ENCODE measurements at regions of chr2 and their contacts with region 1.

Region 1: GRCh38 chr2:44044281-44044720 is 48.5 kb upstream of the LRPPRC start:
- DNase-seq: peak; percentile 65
- H3K4me3 ChIP-seq: no peak overlapping the region
- H3K27ac ChIP-seq: no peak overlapping the region
- H3K4me1 ChIP-seq: no peaks in the 10 kb centered on the region
- H3K27me3 ChIP-seq: peaks cover 1% of the 10 kb centered on the region
- CTCF ChIP-seq: peak; percentile 92 to 97

Region 2: GRCh38 chr2:43219383-43220228 is 824.7 kb before region 1 on chr2:
- CTCF ChIA-PET with region 1: no interaction called
- dilution Hi-C with region 1: no loop called
- in situ Hi-C with region 1: no loop called
- intact Hi-C with region 1: no loop called
- DNase-seq: peak; percentile 88
- H3K4me3 ChIP-seq: peak overlapping the region; percentile 37 to 44 (median 41)
- H3K27ac ChIP-seq: peak overlapping the region; percentile 88
- H3K4me1 ChIP-seq: peaks cover 46% of the 10 kb centered on the region
- H3K27me3 ChIP-seq: no peaks in the 10 kb centered on the region
- CTCF ChIP-seq: peak in 1 of 2 donors; percentile 3

Region 3: DNA sequence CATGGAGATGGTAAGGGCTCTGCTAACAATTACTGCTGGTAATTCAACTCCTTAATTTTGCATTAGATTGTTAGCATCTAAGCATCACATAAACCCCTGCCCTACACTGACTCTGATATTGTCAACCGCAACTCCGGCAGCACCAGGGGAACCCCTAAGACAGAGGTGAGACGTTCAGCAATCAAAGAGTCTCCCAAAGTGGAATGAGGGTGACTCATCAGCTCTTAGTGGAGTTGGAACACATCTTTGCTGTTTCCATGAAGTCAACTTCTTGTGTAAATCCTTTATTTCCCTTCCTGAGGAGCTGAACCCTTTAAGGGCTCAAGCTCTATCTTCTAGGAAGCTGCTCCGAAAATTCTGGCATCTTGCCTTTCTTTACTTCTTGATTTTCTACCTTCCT is 153.4 kb before region 1 on chr2:
- CTCF ChIA-PET with region 1: no interaction called
- dilution Hi-C with region 1: no loop called
- in situ Hi-C with region 1: no loop called
- intact Hi-C with region 1: no loop called
- DNase-seq: peak; percentile 9
- H3K4me3 ChIP-seq: no peak overlapping the region
- H3K27ac ChIP-seq: no peak overlapping the region
- H3K4me1 ChIP-seq: no peaks in the 10 kb centered on the region
- H3K27me3 ChIP-seq: no peaks in the 10 kb centered on the region
- CTCF ChIP-seq: no peak

Region 4: DNA sequence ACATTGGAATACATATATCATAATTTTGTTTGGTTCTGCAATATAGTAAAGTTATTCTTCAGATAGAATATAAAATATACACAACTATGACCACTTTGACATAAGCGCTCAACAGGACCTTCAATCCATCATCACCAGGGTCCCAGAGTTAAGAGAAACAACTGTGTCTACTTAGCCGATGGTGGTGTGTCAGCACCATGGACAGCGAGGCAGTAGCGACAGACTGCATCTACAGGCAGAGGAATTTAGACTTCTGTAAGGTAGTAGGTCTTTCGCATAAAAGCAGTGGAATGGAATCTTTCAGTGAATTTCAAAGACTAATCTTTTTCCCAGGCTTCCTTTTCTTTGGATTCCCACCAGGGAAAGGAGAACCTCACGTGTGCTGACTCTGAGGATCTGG is 28.0 kb before region 1 on chr2:
- CTCF ChIA-PET with region 1: no interaction called
- dilution Hi-C with region 1: no loop called
- in situ Hi-C with region 1: no loop called
- intact Hi-C with region 1: no loop called
- DNase-seq: peak; percentile 30
- H3K4me3 ChIP-seq: no peak overlapping the region
- H3K27ac ChIP-seq: no peak overlapping the region
- H3K4me1 ChIP-seq: no peaks in the 10 kb centered on the region
- H3K27me3 ChIP-seq: peaks cover 2% of the 10 kb centered on the region
- CTCF ChIP-seq: no peak

Region 5: GRCh38 chr2:44087036-44087713 is 42.9 kb after region 1 on chr2:
- CTCF ChIA-PET with region 1: no interaction called
- dilution Hi-C with region 1: no loop called
- in situ Hi-C with region 1: no loop called
- intact Hi-C with region 1: loop called (anchors 1 kb)
- DNase-seq: peak; percentile 56
- H3K4me3 ChIP-seq: peak overlapping the region in 1 of 3 experiments; percentile 16
- H3K27ac ChIP-seq: no peak overlapping the region
- H3K4me1 ChIP-seq: no peaks in the 10 kb centered on the region
- H3K27me3 ChIP-seq: no peaks in the 10 kb centered on the region
- CTCF ChIP-seq: peak; percentile 86 to 94

Region 6: GRCh38 chr2:44291281-44292248 is 247.3 kb after region 1 on chr2:
- CTCF ChIA-PET with region 1: no interaction called
- dilution Hi-C with region 1: no loop called
- in situ Hi-C with region 1: no loop called
- intact Hi-C with region 1: loop called (anchors 1 kb)
- DNase-seq: peak; percentile 85
- H3K4me3 ChIP-seq: peak overlapping the region in 1 of 3 experiments; percentile 7
- H3K27ac ChIP-seq: no peak overlapping the region
- H3K4me1 ChIP-seq: peaks cover 26% of the 10 kb centered on the region
- H3K27me3 ChIP-seq: no peaks in the 10 kb centered on the region
- CTCF ChIP-seq: peak; percentile 52 to 62

Region 7: DNA sequence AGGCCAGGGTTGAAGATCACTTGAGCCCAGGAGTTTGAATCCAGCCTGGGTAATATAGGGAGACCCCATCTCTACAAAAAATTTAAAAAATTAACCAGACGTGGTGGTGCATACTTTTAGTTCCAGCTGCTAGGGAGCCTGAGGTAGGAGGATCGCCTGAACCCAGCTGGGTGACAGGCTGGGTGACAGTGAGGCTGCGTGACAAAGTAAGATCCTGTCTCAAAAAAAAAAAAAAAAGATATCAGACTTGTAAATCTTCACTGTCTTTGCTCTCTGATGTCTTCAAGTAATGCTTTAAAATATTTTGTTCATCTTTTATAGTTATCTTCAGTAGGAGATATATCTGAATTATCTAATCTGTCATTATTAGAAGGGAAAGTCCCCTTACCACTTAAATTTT is 327.9 kb after region 1 on chr2:
- CTCF ChIA-PET with region 1: no interaction called
- dilution Hi-C with region 1: no loop called
- in situ Hi-C with region 1: no loop called
- intact Hi-C with region 1: no loop called
- DNase-seq: no peak
- H3K4me3 ChIP-seq: no peak overlapping the region
- H3K27ac ChIP-seq: no peak overlapping the region
- H3K4me1 ChIP-seq: no peaks in the 10 kb centered on the region
- H3K27me3 ChIP-seq: no peaks in the 10 kb centered on the region
- CTCF ChIP-seq: no peak

Region 8: GRCh38 chr2:44392338-44392943 is 348.1 kb after region 1 on chr2:
- CTCF ChIA-PET with region 1: no interaction called
- dilution Hi-C with region 1: no loop called
- in situ Hi-C with region 1: no loop called
- intact Hi-C with region 1: loop called (anchors 1 kb)
- DNase-seq: peak; percentile 2
- H3K4me3 ChIP-seq: no peak overlapping the region
- H3K27ac ChIP-seq: no peak overlapping the region
- H3K4me1 ChIP-seq: no peaks in the 10 kb centered on the region
- H3K27me3 ChIP-seq: no peaks in the 10 kb centered on the region
- CTCF ChIP-seq: peak; percentile 58 to 71

Region 9: DNA sequence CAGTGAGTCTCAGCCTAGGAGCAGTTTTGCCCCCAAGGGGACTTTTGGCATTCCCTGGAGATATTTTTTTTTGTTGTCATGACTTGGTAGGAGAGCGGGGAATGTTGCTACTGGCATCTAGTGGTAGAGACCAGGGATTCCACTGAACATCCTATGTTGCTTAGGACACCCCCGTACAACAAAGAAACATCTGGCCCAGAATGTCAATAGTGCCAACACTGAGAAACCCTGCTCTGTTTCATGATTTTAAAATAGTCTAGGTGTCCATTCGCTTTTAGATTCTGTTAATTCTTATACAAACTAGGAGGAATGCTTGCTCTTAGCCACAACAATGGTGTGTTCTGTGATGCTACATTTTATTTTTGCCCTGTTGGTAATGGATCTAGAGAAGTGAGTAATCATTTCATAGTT is 671.4 kb after region 1 on chr2:
- CTCF ChIA-PET with region 1: no interaction called
- dilution Hi-C with region 1: no loop called
- in situ Hi-C with region 1: no loop called
- intact Hi-C with region 1: loop called (anchors 1 kb)
- DNase-seq: peak; percentile 56
- H3K4me3 ChIP-seq: no peak overlapping the region
- H3K27ac ChIP-seq: no peak overlapping the region
- H3K4me1 ChIP-seq: no peaks in the 10 kb centered on the region
- H3K27me3 ChIP-seq: no peaks in the 10 kb centered on the region
- CTCF ChIP-seq: peak; percentile 50 to 82

Region 10: DNA sequence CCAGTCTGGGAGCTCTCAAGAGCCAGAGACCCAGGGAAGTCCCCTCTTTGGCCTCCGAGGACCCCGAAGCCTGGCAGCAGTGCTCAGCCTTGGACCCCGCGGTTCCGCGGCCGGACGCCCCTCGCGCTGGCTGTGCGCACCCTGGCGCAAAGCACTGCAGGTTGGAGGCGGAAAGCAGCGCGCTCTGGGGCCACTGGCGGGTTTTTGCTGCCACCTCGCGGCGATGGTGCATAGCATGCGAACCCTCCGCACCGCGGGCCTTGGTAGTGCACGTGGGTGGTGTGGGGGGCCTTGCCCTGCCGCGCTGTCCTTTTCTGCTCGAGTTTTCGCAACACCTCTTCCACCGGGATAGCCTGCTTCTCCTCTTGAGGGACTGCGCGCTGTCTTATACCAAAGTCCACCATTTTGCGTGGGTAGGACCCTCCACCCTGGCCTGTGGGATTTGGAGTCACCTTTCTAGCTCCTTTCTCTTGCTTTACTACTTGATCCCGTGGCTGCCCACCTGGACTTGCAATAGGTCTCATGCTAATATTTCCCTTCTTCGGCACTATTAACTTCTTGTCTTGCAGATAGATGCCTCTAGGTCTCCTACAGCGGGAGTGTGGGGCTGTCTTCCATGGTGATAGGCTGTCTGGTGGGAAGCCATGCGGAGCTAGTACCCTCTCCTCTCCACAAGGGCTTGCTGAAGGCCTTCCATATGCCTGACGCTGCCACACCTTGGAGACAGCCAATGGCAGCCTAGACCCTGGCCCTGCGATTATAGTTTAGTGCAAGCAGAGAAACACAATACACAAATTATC is 911.5 kb after region 1 on chr2:
- CTCF ChIA-PET with region 1: interaction called, 4 read pairs
- dilution Hi-C with region 1: no loop called
- in situ Hi-C with region 1: loop called in 1 of 2 experiments (anchors 25 kb)
- intact Hi-C with region 1: loop called (anchors 1 kb)
- DNase-seq: peak; percentile 54
- H3K4me3 ChIP-seq: peak overlapping the region in 2 of 3 experiments; percentile 25 to 32
- H3K27ac ChIP-seq: no peak overlapping the region
- H3K4me1 ChIP-seq: peaks cover 38% of the 10 kb centered on the region
- H3K27me3 ChIP-seq: peaks cover 25% of the 10 kb centered on the region
- CTCF ChIP-seq: peak; percentile 70 to 91

Measured in mammary epithelial cell (primary cell).